Activated CD8-positive, alpha-beta T cell treated with anti-CD3 and anti-CD28 coated beads, Interleukin-2, amount 10 ng/mL, durations not matched to agents 7 days and 5 days (primary cell): ENCODE measurements at regions of chr3 and their contacts with region 1.

Region 1: DNA sequence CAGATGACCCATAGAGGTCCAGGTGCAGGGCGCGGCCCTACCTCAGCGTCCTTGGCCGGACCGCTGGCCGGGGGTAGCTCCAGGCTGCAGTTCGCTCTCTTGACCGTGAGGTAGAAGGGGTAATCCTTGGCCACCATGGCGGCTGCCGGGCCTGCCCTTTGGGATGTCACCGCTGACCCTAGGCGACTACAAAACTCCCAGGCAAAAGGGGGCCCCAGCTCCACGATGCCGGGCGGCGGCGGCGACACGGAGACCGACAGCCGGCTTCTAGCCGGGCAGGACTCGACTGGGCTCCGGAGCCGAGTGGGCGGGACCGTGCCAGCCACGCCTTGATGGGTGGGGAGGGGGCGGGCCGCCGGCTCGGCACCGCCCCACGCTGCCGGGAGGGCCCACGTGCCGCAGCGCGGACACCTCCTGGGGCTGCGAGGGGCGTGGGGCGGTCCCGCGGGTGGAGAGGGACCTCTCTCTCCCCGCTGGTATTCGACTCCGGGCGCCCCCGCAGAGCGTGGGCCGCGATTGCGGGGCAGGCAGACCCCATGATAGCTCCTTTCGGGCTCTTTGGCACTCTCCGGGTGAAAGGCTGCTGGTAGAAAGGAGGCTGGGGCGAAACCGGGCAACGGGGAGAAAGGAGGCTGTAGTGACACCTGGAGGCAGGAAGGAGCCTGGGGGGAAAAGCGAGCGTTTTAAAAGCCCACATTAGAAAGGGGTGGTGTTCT is at the start of gene ARHGEF3:
- DNase-seq: peak; percentile 89
- ATAC-seq: peak; percentile 84
- H3K4me3 Mint-ChIP-seq: peak within 1 kb of the TSS; percentile 83
- H3K27ac Mint-ChIP-seq: peak within 1 kb of the TSS; percentile 84
- H3K4me1 Mint-ChIP-seq: peaks cover 28% of the 10 kb centered on the region
- H3K27me3 Mint-ChIP-seq: no peaks in the 10 kb centered on the region
- total RNA-seq, gene ARHGEF3: 94.6 to 101 TPM

Region 2: GRCh38 chr3:56693750-56694149 is 108.1 kb before region 1 on chr3:
- CTCF ChIA-PET with region 1: interaction called, 278 read pairs
- POLR2A ChIA-PET with region 1: interaction called, 7 read pairs
- DNase-seq: no peak
- ATAC-seq: peak; percentile 23
- H3K4me3 Mint-ChIP-seq: peak overlapping the region; percentile 80
- H3K27ac Mint-ChIP-seq: peak overlapping the region; percentile 94
- H3K4me1 Mint-ChIP-seq: peaks cover 47% of the 10 kb centered on the region
- H3K27me3 Mint-ChIP-seq: no peaks in the 10 kb centered on the region

Region 3: GRCh38 chr3:56725175-56725574 is 76.6 kb before region 1 on chr3:
- CTCF ChIA-PET with region 1: interaction called, 148 read pairs
- POLR2A ChIA-PET with region 1: interaction called, 42 read pairs
- DNase-seq: peak; percentile 89
- ATAC-seq: peak; percentile 93
- H3K4me3 Mint-ChIP-seq: peak overlapping the region; percentile 71
- H3K27ac Mint-ChIP-seq: peak overlapping the region; percentile 96
- H3K4me1 Mint-ChIP-seq: peaks cover 69% of the 10 kb centered on the region
- H3K27me3 Mint-ChIP-seq: no peaks in the 10 kb centered on the region

Region 4: DNA sequence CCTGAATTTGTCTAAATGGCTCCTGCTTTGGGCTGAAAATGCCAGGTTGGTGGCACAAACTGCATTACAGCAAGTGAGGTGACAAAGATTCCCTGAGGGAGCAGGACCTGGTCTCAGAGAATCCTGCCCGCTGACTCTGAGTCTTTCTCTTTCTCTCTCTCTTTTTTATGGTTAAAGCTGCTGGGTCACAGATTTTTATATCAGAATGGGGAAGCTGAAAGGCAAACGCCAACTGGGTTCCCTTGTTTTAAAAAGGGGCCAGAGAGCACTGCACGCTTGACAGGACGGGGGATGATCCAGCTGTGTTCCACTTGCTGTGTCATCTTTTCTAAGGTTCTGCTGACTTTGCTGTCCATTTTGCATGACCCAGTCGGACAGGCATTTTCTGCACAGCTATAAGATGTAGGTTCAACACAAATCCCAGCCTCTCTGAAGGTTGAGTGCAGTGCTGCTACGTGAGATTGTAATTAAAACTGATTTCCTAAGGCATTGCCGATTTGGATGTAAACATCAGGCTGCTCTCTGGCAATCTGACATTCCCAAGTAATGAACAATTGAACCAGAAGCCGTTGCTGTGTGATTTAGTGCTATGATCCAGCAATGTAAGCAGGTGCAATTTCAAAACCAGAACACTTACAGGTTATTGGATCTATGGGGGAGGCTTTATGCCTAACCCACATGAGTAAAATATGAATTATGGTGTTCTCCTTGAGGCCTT is 25.8 kb before region 1 on chr3:
- CTCF ChIA-PET with region 1: interaction called, 97 read pairs
- POLR2A ChIA-PET with region 1: interaction called, 309 read pairs
- DNase-seq: no peak
- ATAC-seq: no peak
- H3K4me3 Mint-ChIP-seq: no peak overlapping the region
- H3K27ac Mint-ChIP-seq: peak overlapping the region; percentile 71
- H3K4me1 Mint-ChIP-seq: peaks cover 88% of the 10 kb centered on the region
- H3K27me3 Mint-ChIP-seq: no peaks in the 10 kb centered on the region

Region 5: DNA sequence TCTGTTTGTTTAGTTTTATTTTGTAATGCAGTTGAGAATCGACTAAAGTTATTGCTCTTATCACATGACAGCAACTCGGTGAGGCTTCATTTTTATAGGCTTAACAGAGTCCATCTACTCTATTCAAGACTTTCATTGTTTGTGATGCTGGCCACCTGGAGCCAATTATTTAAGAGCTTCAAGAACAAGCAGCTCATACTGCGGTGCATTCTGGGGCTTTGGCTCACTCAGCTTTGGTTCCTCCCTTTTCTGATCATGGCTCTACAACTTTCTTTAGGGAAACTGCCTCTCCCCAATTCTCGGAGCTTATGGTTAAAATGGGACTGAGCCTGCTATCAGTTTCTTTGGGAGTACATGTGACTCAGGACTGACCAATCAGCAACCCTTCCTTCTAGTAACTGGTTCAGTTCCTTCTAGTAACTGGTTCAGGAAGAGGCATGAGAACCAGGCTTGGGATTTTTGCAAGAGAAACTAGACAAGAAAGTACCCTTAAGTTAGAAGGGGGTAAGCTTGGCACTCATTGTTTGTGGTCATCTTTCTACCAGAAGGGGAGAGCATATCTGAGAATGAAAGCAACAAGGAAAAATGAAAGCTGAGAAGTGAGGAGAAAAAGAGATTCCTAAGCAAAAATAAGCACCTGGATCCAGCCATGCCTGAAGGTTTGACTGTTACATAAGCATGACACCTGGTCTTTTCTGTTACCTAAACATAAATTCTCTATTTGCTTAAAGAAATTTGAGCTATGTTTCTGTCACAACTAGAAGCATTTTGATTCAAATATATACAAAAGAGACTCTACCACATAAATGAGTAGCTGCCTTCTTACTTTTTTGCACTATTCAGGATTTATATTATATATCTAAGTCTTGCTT is 24.0 kb after region 1 on chr3:
- CTCF ChIA-PET with region 1: interaction called, 34 read pairs
- POLR2A ChIA-PET with region 1: interaction called, 3 read pairs
- DNase-seq: no peak
- ATAC-seq: no peak
- H3K4me3 Mint-ChIP-seq: no peak overlapping the region
- H3K27ac Mint-ChIP-seq: no peak overlapping the region
- H3K4me1 Mint-ChIP-seq: peaks cover 47% of the 10 kb centered on the region
- H3K27me3 Mint-ChIP-seq: no peaks in the 10 kb centered on the region

Region 6: GRCh38 chr3:56923521-56924224 is 121.9 kb after region 1 on chr3:
- CTCF ChIA-PET with region 1: interaction called, 95 read pairs
- POLR2A ChIA-PET with region 1: interaction called, 88 read pairs
- DNase-seq: peak; percentile 65
- ATAC-seq: peak; percentile 73
- H3K4me3 Mint-ChIP-seq: peak overlapping the region; percentile 41
- H3K27ac Mint-ChIP-seq: peak overlapping the region; percentile 79
- H3K4me1 Mint-ChIP-seq: peaks cover 86% of the 10 kb centered on the region
- H3K27me3 Mint-ChIP-seq: no peaks in the 10 kb centered on the region